GM10248 (cell line): ENCODE measurements at regions of chr10 and their contacts with region 1.

Region 1: GRCh38 chr10:119058010-119058409 is 22.6 kb downstream of the EIF3A start:
- DNase-seq: no peak
- CTCF ChIP-seq: no peak

Region 2: DNA sequence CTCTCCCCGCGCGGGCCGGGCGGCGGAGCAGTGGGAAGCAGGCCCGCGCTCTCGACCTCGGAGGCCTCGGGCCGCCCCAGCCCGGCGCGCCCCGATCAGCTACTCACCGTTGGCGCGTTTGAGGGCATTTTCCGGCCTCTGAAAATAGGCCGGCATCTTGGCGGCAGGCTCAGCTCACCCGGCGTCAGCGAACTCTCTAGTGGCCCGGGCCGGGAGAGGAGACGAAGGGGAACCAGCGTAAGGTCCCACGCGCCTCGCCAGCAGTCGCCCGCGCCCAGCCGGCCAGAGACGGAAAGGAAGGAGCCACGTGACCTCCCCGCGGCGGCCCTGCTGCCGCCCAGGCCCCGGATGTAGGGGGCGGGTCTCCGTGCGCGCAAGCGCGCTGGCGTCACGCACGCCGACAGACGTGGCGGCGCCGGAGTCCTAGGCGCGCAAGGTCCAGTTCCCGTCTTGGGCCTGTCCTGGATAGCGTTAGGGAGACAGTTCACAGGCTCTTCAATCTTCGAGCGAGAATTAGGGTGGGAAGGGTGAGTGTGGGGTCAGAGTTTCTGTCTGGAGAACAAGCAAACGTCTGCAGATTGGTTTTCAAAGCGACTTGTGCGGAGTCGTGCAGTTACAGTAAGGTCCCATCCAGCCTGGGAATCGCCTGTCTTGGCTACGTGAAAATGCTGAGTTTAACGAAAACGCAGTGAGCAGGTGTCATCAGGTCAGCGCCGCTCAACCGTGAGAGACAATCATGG is 22.7 kb after region 1 on chr10 and contains the start of gene EIF3A:
- CTCF ChIA-PET with region 1: no interaction called
- POLR2A ChIA-PET with region 1: no interaction called
- DNase-seq: peak; percentile 96
- CTCF ChIP-seq: no peak

Region 3: DNA sequence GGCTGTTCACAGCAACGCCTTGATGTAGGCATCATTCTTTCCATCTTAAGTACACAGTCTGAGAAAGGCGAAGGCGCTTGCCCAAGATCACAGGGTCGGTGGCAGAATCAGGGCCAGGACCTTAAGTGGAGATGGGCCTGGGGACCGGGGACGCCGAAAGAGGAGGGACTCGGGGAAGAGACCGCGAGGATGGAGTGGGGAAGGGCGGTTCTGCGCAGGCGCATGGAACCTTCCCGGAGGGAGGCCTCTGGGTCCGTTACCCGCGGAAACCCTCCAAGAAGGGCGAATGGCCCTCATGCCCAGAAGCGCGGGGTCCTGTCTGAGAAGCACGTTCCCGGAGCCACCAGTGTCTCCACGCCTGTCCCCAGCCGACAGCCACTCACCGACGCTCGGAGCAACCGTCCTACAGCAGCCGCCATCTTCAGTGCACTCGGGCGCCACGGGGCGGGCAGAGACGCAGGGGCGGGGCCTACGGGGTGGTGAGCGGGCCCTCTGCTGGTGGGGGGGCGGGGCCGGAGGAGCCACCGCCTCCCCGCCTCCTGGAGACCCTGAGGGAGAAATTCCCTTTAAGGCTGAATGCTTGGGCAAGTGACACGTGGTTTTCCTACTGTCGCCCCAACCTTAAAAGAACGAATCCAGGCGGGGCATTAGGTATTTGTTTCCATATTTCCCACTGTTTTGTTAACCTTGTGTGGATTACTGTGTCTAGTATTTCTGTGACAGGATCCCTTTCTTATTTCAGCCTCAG is 120.5 kb after region 1 on chr10 and contains the start of gene PRDX3:
- CTCF ChIA-PET with region 1: no interaction called
- POLR2A ChIA-PET with region 1: interaction called, 10 read pairs
- DNase-seq: peak; percentile 91
- CTCF ChIP-seq: no peak